ENCODE measurements at regions of chr2 and their contacts with region 1.

Region 1: DNA sequence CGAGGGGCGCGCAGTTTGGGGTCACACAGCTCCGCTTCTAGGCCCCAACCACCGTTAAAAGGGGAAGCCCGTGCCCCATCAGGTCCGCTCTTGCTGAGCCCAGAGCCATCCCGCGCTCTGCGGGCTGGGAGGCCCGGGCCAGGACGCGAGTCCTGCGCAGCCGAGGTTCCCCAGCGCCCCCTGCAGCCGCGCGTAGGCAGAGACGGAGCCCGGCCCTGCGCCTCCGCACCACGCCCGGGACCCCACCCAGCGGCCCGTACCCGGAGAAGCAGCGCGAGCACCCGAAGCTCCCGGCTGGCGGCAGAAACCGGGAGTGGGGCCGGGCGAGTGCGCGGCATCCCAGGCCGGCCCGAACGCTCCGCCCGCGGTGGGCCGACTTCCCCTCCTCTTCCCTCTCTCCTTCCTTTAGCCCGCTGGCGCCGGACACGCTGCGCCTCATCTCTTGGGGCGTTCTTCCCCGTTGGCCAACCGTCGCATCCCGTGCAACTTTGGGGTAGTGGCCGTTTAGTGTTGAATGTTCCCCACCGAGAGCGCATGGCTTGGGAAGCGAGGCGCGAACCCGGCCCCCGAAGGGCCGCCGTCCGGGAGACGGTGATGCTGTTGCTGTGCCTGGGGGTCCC is at the start of gene ITGA4:
- DNase-seq: peak; percentile 35
- H3K4me3 ChIP-seq: peak within 1 kb of the TSS; percentile 65
- CTCF ChIP-seq: peak; percentile 78

Region 2: GRCh38 chr2:181104512-181105115 is 352.6 kb before region 1 on chr2:
- in situ Hi-C with region 1: loop called (anchors 25 kb)
- DNase-seq: peak; percentile 49
- H3K4me3 ChIP-seq: no peak overlapping the region
- CTCF ChIP-seq: peak; percentile 77

Measured in astrocyte of the cerebellum (primary cell).